ENCODE measurements at regions of chr5 and their contacts with region 1.

Region 1: DNA sequence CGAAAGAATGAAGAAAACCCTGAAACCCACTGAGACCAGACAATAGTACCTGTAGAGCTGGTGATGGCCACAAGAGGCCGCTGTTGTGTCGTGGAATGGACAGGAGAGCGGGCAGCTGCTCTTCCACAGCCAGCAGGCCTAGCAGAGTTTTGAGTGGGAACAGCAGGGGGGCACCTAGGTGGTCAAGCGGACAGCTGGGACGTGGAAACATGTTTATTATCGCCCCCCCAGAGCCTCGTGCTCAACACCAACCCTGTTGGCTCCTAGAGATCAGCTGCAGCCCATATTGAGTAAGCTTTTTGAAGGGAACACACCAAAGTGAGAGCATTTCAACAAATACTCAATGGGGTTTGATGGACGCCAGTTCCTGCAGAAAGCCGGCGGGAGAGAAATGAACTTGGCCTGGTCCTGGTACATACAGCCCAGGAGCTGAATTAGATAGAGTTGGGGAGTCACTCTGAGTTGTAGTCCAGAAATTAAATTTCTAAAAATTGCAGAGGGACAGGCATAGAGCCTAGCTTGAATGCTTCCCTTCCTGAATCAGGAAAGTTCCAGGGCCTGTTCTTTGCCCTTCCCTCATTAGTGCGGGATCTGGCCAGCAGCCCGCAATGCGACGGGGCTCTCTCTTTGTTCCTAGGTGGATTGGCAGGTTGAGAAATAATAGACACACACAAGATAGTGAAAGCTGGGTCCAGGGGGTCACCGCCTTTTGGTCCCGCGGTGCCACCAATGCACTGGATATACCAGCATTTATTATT is 33.8 kb downstream of the MFAP3 start:
- DNase-seq: peak; percentile 14
- H3K4me3 ChIP-seq: peak overlapping the region in 1 of 4 donors; percentile 27
- H3K27ac ChIP-seq: no peak overlapping the region
- H3K4me1 ChIP-seq: peaks cover 0 to 11% (median 0%) of the 10 kb centered on the region in 3 donors
- H3K27me3 ChIP-seq: no peaks in the 10 kb centered on the region
- CTCF ChIP-seq: peak; percentile 89 to 94 (median 91)
- POLR2A ChIP-seq: no peak

Region 2: DNA sequence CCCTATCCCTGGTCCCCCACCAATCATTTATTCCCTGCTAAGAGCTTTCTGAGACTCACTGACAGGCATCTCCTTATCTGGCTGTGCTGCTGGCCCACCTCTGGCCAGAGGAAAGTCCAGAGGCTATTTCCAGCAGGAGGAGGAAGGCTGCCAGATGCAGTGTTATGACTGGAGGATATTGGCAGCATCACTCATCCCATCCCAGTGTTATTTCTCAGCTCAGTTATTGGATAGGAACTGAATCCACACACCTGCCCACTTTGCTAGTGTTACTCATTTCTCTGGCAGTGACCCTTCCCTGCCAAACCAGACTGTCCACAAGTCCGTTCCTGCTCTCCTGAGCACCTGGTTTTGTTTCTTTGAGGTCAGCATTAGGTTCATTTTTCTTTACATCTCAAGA is 353.9 kb before region 1 on chr5:
- intact Hi-C with region 1: no loop called
- DNase-seq: no peak
- H3K4me3 ChIP-seq: no peak overlapping the region
- H3K27ac ChIP-seq: no peak overlapping the region
- H3K4me1 ChIP-seq: peaks cover 0 to 7% (median 0%) of the 10 kb centered on the region in 3 donors
- H3K27me3 ChIP-seq: no peaks in the 10 kb centered on the region
- CTCF ChIP-seq: no peak
- POLR2A ChIP-seq: no peak

Region 3: DNA sequence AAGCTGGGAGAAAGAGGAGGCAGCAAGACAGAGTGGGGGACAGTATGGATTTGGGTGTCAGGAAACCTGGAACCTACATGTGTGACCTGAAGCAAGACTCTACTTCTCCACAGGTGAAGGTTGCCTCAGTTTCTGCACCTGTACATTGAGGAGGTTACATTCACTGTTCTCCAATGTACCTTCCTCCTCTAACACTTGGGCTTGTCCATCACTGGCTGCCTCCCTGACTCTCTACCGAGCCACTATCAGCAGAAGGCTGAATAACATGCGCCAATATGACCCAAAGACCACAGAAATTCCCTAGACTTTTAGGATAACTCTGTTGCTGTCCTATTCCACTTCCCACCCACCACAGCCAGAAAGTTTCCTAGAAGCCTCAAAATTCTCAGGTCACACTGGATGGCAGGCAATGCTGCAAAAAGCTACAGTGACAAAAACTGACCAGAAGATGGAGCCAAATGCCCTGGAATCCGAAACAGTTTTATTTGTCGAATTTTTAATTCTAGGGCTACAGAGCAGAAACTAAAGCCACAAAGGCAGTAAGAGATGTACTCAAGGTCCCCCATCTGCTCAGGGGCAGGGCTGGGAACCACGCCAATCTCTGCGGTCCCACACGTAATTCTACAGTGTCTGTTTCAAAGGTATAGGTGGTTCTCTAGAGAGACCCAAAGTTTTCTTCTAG is 98.3 kb before region 1 on chr5:
- intact Hi-C with region 1: no loop called
- DNase-seq: no peak
- H3K4me3 ChIP-seq: no peak overlapping the region
- H3K27ac ChIP-seq: no peak overlapping the region
- H3K4me1 ChIP-seq: peaks cover 0 to 14% (median 0%) of the 10 kb centered on the region in 3 donors
- H3K27me3 ChIP-seq: peaks cover 0 to 10% (median 0%) of the 10 kb centered on the region in 4 donors
- CTCF ChIP-seq: peak; percentile 28 to 75 (median 60)
- POLR2A ChIP-seq: no peak

Region 4: GRCh38 chr5:154189819-154190594 is 117.4 kb after region 1 on chr5:
- intact Hi-C with region 1: loop called (anchors 5 kb)
- DNase-seq: peak; percentile 58
- H3K4me3 ChIP-seq: peak overlapping the region; percentile 69 to 93 (median 88)
- H3K27ac ChIP-seq: peak overlapping the region; percentile 68 to 92 (median 83)
- H3K4me1 ChIP-seq: peaks cover 17 to 51% (median 26%) of the 10 kb centered on the region in 3 donors
- H3K27me3 ChIP-seq: peaks cover 0 to 11% (median 0%) of the 10 kb centered on the region in 4 donors
- CTCF ChIP-seq: peak in 5 of 6 experiments; percentile 15 to 36 (median 29)
- POLR2A ChIP-seq: peak in 1 of 4 donors; percentile 17

Region 5: DNA sequence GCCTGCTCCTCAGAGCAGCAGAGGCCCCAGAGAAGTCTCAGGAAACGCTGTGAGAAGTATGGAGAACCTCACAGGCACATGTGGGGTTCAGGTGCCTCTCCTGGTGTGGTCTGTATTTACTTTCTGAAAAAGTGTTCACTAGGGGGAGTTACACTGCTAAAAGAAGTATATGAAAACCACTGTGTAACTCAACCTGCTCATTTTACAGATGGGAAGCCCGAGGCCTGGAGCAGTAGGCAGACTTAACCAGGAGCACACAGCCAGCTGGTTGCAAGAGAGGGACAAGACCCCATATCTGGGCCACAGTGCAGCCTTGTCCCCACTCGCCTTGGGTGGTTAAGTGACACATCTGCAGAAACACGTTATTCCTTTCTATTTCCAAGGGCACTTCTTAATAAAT is 260.4 kb after region 1 on chr5:
- intact Hi-C with region 1: no loop called
- DNase-seq: no peak
- H3K4me3 ChIP-seq: no peak overlapping the region
- H3K27ac ChIP-seq: no peak overlapping the region
- H3K4me1 ChIP-seq: no peaks in the 10 kb centered on the region
- H3K27me3 ChIP-seq: no peaks in the 10 kb centered on the region
- CTCF ChIP-seq: no peak
- POLR2A ChIP-seq: no peak

Region 6: GRCh38 chr5:154647114-154647760 is 574.6 kb after region 1 on chr5:
- intact Hi-C with region 1: no loop called
- DNase-seq: no peak
- H3K4me3 ChIP-seq: peak overlapping the region in 3 of 4 donors; percentile 22 to 60 (median 37)
- H3K27ac ChIP-seq: no peak overlapping the region
- H3K4me1 ChIP-seq: peaks cover 6 to 14% (median 10%) of the 10 kb centered on the region in 3 donors
- H3K27me3 ChIP-seq: peaks cover 0 to 11% (median 0%) of the 10 kb centered on the region in 4 donors
- CTCF ChIP-seq: no peak
- POLR2A ChIP-seq: no peak

Measured in esophagus squamous epithelium (tissue), 5 donors.